ENCODE measurements at regions of chr11 and their contacts with region 1.

Region 1: DNA sequence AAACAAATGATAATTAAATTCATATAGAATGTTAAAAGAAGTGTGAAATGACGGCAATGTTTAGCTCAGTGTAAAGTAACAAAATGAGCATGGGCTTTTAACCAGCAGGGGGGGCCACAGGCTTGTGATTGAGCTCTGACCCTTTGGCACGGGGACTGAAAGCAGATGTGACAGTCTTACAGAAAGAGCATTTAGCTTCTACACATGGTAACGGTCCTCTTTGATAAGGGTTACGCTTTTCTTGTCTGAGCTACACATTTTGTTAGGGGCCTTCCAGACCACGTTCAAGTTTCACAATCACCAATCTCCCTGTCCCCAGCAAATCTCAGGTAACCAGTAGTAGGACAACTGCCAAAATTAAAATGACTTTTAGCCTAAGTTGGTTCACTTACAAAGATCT is 262.5 kb downstream of the DCDC1 start:
- DNase-seq: peak; percentile 51
- ATAC-seq: peak; percentile 89
- H3K4me3 ChIP-seq: no peak overlapping the region
- H3K27ac ChIP-seq: no peak overlapping the region
- H3K4me1 ChIP-seq: no peaks in the 10 kb centered on the region
- H3K27me3 ChIP-seq: no peaks in the 10 kb centered on the region
- CTCF ChIP-seq: peak; percentile 67 to 86 (median 72)
- POLR2A ChIP-seq: no peak
- RAD21 ChIP-seq: peak; percentile 83

Region 2: DNA sequence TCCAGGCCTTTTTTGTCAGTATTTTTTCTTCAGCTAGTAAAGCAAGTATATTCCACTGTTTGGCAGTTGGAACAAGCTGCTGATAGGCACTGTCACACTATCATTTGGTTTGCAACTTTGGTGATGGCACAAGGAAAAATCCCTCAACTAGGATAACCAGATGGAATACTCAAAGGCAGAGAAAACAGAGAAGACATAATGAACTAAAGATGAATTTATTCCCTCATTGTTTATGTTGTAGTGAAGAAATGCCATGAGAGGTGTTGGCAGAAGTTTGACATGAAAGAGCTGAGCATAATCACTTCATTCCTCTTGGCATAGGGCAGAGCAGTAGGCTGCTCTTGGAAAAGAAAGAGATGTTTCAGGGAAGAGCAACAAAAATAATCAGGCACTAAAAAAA is 836.4 kb before region 1 on chr11:
- CTCF ChIA-PET with region 1: no interaction called
- POLR2A ChIA-PET with region 1: no interaction called
- RAD21 ChIA-PET with region 1: no interaction called
- intact Hi-C with region 1: no loop called
- DNase-seq: no peak
- ATAC-seq: no peak
- H3K4me3 ChIP-seq: no peak overlapping the region
- H3K27ac ChIP-seq: no peak overlapping the region
- H3K4me1 ChIP-seq: no peaks in the 10 kb centered on the region
- H3K27me3 ChIP-seq: peaks cover 26% of the 10 kb centered on the region
- CTCF ChIP-seq: no peak
- POLR2A ChIP-seq: no peak
- RAD21 ChIP-seq: no peak

Region 3: DNA sequence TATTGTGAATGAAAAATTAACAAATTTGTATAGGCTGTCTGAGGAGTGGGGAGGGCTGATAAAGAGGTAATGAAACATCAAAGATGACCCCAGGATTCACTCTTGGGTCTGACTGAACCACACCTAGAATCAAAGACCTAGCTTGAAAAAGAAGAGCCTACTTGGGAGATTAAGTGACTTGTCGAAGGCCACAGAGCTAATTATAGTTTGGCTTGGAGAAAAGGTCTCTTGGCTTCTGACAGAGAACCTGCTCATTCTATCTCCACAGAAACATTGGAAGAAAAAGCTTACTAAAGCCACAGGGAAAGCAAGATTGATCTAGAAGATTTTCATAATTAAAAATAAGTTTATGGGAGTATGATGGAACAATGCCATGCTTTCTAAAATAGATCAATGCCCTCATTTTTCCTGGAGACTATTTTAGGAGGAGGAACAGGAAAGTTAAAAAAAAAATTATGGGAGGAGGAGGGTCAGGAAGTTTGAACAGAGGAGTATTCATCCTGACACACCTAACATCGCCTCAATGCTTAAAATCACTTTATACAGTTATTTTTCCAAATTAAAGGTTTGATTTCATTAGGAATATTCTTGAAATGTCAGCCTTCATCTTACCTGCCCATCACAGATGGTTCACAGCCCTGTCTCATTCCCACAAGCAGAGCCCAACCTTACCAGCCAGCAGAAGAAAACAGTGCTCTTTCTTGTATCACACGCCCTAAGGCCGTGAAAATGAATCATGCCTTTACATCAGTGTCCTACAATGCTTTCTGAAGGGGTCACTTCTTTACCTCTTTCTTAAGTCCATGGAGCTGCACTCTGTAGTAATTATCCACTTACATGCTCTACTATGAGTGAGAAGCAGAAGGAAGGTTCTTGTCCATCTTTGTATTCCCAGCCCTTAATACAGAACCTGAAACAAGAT is 289.8 kb before region 1 on chr11:
- CTCF ChIA-PET with region 1: no interaction called
- POLR2A ChIA-PET with region 1: no interaction called
- RAD21 ChIA-PET with region 1: no interaction called
- intact Hi-C with region 1: no loop called
- DNase-seq: no peak
- ATAC-seq: no peak
- H3K4me3 ChIP-seq: no peak overlapping the region
- H3K27ac ChIP-seq: no peak overlapping the region
- H3K4me1 ChIP-seq: no peaks in the 10 kb centered on the region
- H3K27me3 ChIP-seq: 0 out of 2 replicates have a peak, but pooled peaks cover 11% of the 10 kb centered on the region
- CTCF ChIP-seq: no peak
- POLR2A ChIP-seq: no peak
- RAD21 ChIP-seq: no peak

Region 4: DNA sequence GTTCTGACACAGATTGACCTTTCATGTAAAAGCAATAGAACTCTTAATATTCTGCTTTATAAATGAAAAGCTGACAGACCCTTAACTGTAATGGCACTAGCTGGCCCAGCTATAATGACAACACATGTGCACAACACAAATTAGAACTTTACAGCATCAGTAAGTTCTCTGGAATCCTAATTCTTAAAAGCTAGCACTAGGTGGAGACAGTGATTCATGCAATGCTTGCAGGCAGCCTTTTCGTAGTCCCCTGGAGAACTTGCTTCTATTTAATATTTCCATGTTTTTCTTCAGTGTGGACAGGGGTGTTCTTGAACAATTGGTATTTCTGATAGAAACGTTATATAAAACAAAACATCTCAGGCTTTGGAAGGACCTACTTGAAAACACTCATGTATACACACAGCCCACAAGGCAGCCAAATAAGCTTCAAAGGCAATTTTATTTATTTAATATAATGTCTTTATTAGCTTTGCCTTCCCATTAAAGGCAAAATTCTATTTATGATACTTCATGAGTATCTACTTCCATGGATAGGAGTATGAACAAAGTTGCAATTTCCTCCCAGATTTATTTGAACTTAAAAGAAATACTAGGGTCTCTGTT is 146.6 kb before region 1 on chr11:
- CTCF ChIA-PET with region 1: interaction called, 12 read pairs
- POLR2A ChIA-PET with region 1: no interaction called
- RAD21 ChIA-PET with region 1: no interaction called
- intact Hi-C with region 1: no loop called
- DNase-seq: peak; percentile 35
- ATAC-seq: peak; percentile 75
- H3K4me3 ChIP-seq: no peak overlapping the region
- H3K27ac ChIP-seq: no peak overlapping the region
- H3K4me1 ChIP-seq: no peaks in the 10 kb centered on the region
- H3K27me3 ChIP-seq: peaks cover 9% of the 10 kb centered on the region
- CTCF ChIP-seq: peak; percentile 54 to 66 (median 60)
- POLR2A ChIP-seq: no peak
- RAD21 ChIP-seq: peak; percentile 68

Region 5: DNA sequence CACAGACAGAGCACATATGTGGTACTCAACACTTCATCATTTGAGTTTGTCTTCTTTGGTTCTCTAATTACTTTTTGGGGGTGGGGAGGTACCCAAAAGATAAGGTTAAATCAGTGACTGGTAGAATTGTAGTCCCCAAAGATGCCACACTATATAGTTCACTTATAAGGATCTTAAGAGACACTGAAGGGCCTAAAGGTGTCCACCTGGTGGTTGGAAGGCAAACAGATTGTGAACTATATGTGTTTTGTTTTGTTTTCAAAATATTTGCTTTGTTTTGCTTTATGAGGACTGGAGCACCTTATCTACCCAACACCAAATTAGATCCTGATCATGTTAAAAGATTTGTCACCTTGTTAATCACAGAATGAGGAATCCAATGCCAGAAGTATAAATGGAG is 126.4 kb after region 1 on chr11:
- CTCF ChIA-PET with region 1: interaction called, 103 read pairs
- POLR2A ChIA-PET with region 1: no interaction called
- RAD21 ChIA-PET with region 1: interaction called, 8 read pairs
- intact Hi-C with region 1: loop called (anchors 1 kb)
- DNase-seq: peak; percentile 29
- ATAC-seq: peak; percentile 87
- H3K4me3 ChIP-seq: no peak overlapping the region
- H3K27ac ChIP-seq: no peak overlapping the region
- H3K4me1 ChIP-seq: no peaks in the 10 kb centered on the region
- H3K27me3 ChIP-seq: no peaks in the 10 kb centered on the region
- CTCF ChIP-seq: peak; percentile 40 to 60 (median 53); a peak in 5 of 6 replicates
- POLR2A ChIP-seq: no peak
- RAD21 ChIP-seq: peak; percentile 40

Region 6: DNA sequence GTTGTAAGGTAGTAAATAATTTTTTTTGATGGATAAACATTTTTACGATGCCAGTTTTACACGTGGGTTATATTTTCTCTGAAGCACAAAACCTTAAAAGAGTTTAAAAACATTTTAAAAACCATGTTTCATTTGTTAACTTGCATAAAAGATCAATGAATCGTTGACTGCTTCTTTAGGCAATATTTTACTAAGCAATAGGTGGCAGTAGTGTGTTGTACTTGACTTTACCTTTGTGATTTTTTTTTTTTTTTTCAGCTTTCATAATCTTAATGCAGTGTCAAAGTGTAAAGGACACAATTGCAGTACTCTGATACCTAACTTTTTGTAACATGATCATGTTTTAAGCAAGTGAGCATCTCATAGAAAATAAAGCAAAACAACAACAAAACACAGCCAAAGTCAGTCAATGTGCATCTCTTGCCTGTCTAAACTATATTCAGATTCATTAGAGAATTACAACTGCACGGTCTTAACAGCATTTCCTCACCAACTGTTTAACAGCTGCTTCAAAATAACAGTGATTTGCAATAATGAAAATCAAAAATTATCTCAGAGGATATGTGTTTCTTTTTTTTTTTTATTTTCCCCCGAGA is 290.3 kb after region 1 on chr11:
- CTCF ChIA-PET with region 1: no interaction called
- POLR2A ChIA-PET with region 1: no interaction called
- RAD21 ChIA-PET with region 1: no interaction called
- intact Hi-C with region 1: loop called (anchors 10 kb)
- DNase-seq: no peak
- ATAC-seq: no peak
- H3K4me3 ChIP-seq: no peak overlapping the region
- H3K27ac ChIP-seq: no peak overlapping the region
- H3K4me1 ChIP-seq: no peaks in the 10 kb centered on the region
- H3K27me3 ChIP-seq: no peaks in the 10 kb centered on the region
- CTCF ChIP-seq: peak; percentile 37 to 72 (median 51); a peak in 4 of 6 replicates
- POLR2A ChIP-seq: no peak
- RAD21 ChIP-seq: peak; percentile 59

Region 7: GRCh38 chr11:31958076-31958735 is 851.1 kb after region 1 on chr11:
- CTCF ChIA-PET with region 1: interaction called, 26 read pairs
- POLR2A ChIA-PET with region 1: no interaction called
- RAD21 ChIA-PET with region 1: no interaction called
- intact Hi-C with region 1: loop called (anchors 5 kb)
- DNase-seq: peak; percentile 40
- ATAC-seq: peak; percentile 96
- H3K4me3 ChIP-seq: no peak overlapping the region
- H3K27ac ChIP-seq: no peak overlapping the region
- H3K4me1 ChIP-seq: peaks cover 0 to 4% of the 10 kb centered on the region in 2 experiments; a peak in 1 of 4 replicates
- H3K27me3 ChIP-seq: no peaks in the 10 kb centered on the region
- CTCF ChIP-seq: peak; percentile 71 to 96 (median 94)
- POLR2A ChIP-seq: no peak
- RAD21 ChIP-seq: peak; percentile 79

Measured in HCT116 (cell line).